ENCODE measurements at regions of chr18 and their contacts with region 1.

Region 1: GRCh38 chr18:21111341-21112139 is at the start of gene ROCK1:
- DNase-seq: peak; percentile 97
- H3K4me3 Mint-ChIP-seq: peak within 1 kb of the TSS; percentile 96
- H3K27ac Mint-ChIP-seq: peak within 1 kb of the TSS; percentile 96
- H3K4me1 Mint-ChIP-seq: peaks cover 17% of the 10 kb centered on the region
- H3K27me3 Mint-ChIP-seq: peaks cover 3% of the 10 kb centered on the region
- total RNA-seq, gene ROCK1: 53.9 and 60.9 TPM in 2 replicates

Region 2: GRCh38 chr18:20971886-20972267 is 139.7 kb before region 1 on chr18:
- intact Hi-C with region 1: loop called (anchors 5 kb)
- DNase-seq: no peak
- H3K4me3 Mint-ChIP-seq: no peak overlapping the region
- H3K27ac Mint-ChIP-seq: no peak overlapping the region
- H3K4me1 Mint-ChIP-seq: peaks cover 1% of the 10 kb centered on the region
- H3K27me3 Mint-ChIP-seq: no peaks in the 10 kb centered on the region

Region 3: DNA sequence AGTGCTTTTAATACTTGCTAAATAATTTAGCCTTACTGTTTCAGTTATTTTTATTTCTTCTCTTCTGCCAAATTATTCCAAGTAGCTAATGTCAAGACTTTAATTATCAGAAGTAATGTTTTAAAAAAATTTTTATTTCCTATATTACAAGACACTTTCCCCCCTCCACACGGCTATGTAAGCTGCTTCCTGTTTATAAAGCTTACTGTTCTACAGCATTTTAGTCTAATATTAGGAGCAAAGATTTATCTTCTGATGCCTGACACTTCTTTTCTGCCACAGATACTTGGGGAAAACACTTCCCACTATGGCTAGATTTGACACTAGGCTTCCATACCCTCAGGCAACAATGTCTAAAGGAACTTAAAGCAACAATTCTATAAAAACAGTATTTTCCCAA is 62.2 kb before region 1 on chr18:
- intact Hi-C with region 1: loop called (anchors 10 kb)
- DNase-seq: no peak
- H3K4me3 Mint-ChIP-seq: no peak overlapping the region
- H3K27ac Mint-ChIP-seq: no peak overlapping the region
- H3K4me1 Mint-ChIP-seq: peaks cover 15% of the 10 kb centered on the region
- H3K27me3 Mint-ChIP-seq: no peaks in the 10 kb centered on the region

Region 4: GRCh38 chr18:21064347-21064746 is 47.2 kb before region 1 on chr18:
- intact Hi-C with region 1: loop called (anchors 5 kb)
- DNase-seq: no peak
- H3K4me3 Mint-ChIP-seq: no peak overlapping the region
- H3K27ac Mint-ChIP-seq: no peak overlapping the region
- H3K4me1 Mint-ChIP-seq: peaks cover 5% of the 10 kb centered on the region
- H3K27me3 Mint-ChIP-seq: no peaks in the 10 kb centered on the region

Region 5: DNA sequence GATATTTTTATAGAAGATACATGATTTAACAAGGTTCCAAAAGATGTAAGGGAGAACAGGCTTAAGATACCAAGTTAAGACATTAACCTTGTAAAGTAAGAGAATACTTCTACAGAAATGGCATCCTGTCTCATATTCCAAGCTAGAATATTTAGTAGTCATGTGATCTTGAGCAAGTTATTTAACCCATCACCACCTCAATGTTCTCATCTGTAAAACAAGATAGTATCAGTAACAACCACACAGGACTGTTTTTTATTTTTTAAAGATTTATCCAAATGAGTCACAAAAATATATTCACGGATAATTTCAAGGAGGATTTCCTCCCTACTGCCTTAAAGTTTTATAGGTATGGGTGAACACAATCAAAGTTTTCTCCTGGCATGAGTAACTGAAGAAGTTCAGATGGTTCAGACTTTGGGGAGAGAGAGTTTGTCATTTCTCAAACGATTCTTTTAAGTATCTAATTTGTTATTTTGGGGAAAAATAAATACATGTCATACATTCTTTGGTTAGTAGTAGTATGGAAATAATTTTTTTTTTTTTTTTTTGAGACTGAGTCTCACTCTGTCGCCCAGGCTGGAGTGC is 25.9 kb before region 1 on chr18:
- intact Hi-C with region 1: loop called (anchors 2 kb)
- DNase-seq: no peak
- H3K4me3 Mint-ChIP-seq: no peak overlapping the region
- H3K27ac Mint-ChIP-seq: no peak overlapping the region
- H3K4me1 Mint-ChIP-seq: peaks cover 38% of the 10 kb centered on the region
- H3K27me3 Mint-ChIP-seq: no peaks in the 10 kb centered on the region

Region 6: GRCh38 chr18:21600526-21601410 is 489.2 kb after region 1 on chr18 and contains the start of gene ESCO1:
- intact Hi-C with region 1: loop called (anchors 2 kb)
- DNase-seq: peak; percentile 95
- H3K4me3 Mint-ChIP-seq: peak within 1 kb of the TSS; percentile 98
- H3K27ac Mint-ChIP-seq: peak within 1 kb of the TSS; percentile 84
- H3K4me1 Mint-ChIP-seq: peaks cover 23% of the 10 kb centered on the region
- H3K27me3 Mint-ChIP-seq: peaks cover 3% of the 10 kb centered on the region
- total RNA-seq, gene ESCO1: 20.5 and 21.4 TPM in 2 replicates

Region 7: GRCh38 chr18:21740724-21741510 is 629.4 kb after region 1 on chr18 and contains the start of gene MIB1:
- intact Hi-C with region 1: loop called (anchors 2 kb)
- DNase-seq: peak; percentile 36
- H3K4me3 Mint-ChIP-seq: peak within 1 kb of the TSS; percentile 96
- H3K27ac Mint-ChIP-seq: peak within 1 kb of the TSS; percentile 97
- H3K4me1 Mint-ChIP-seq: peaks cover 35% of the 10 kb centered on the region
- H3K27me3 Mint-ChIP-seq: no peaks in the 10 kb centered on the region
- total RNA-seq, gene MIB1: 45.0 and 45.7 TPM in 2 replicates